ENCODE measurements at regions of chr9 and their contacts with region 1.

Region 1: GRCh38 chr9:14652729-14653377 is 40.4 kb downstream of the ZDHHC21 start:
- DNase-seq: no peak
- H3K4me3 Mint-ChIP-seq: no peak overlapping the region
- H3K27ac Mint-ChIP-seq: no peak overlapping the region
- H3K4me1 Mint-ChIP-seq: no peaks in the 10 kb centered on the region
- H3K27me3 Mint-ChIP-seq: no peaks in the 10 kb centered on the region

Region 2: GRCh38 chr9:14633906-14634565 is 18.8 kb before region 1 on chr9:
- intact Hi-C with region 1: loop called (anchors 2 kb)
- DNase-seq: no peak
- H3K4me3 Mint-ChIP-seq: no peak overlapping the region
- H3K27ac Mint-ChIP-seq: no peak overlapping the region
- H3K4me1 Mint-ChIP-seq: no peaks in the 10 kb centered on the region
- H3K27me3 Mint-ChIP-seq: no peaks in the 10 kb centered on the region

Region 3: GRCh38 chr9:14710804-14711203 is 58.0 kb after region 1 on chr9:
- intact Hi-C with region 1: no loop called
- DNase-seq: no peak
- H3K4me3 Mint-ChIP-seq: no peak overlapping the region
- H3K27ac Mint-ChIP-seq: no peak overlapping the region
- H3K4me1 Mint-ChIP-seq: no peaks in the 10 kb centered on the region
- H3K27me3 Mint-ChIP-seq: no peaks in the 10 kb centered on the region

Region 4: GRCh38 chr9:14895849-14896248 is 243.0 kb after region 1 on chr9:
- intact Hi-C with region 1: no loop called
- DNase-seq: no peak
- H3K4me3 Mint-ChIP-seq: no peak overlapping the region
- H3K27ac Mint-ChIP-seq: no peak overlapping the region
- H3K4me1 Mint-ChIP-seq: no peaks in the 10 kb centered on the region
- H3K27me3 Mint-ChIP-seq: no peaks in the 10 kb centered on the region

Measured in activated T-helper 1 cell treated with anti-CD3 and anti-CD28 coated beads, Interleukin-12 subunit alpha, Interleukin-12 subunit beta, Interleukin-2, Interleukin-4 antibody, amounts not matched to agents 30 ng/mL and 10 ng/mL and 1 ng/mL, durations not matched to agents 14 hours and 24 hours and 36 hours (primary cell).